ENCODE measurements at regions of chr14 and their contacts with region 1.

Region 1: GRCh38 chr14:60724137-60724619 is at the start of gene SIX4:
- DNase-seq: peak; percentile 34
- H3K4me3 Mint-ChIP-seq: peak within 1 kb of the TSS; percentile 79
- H3K27ac Mint-ChIP-seq: no peak within 1 kb of the TSS
- H3K4me1 Mint-ChIP-seq: peaks cover 11% of the 10 kb centered on the region
- H3K27me3 Mint-ChIP-seq: peaks cover 71% of the 10 kb centered on the region
- total RNA-seq, gene SIX4: 0.17 TPM in 1 of 2 experiments, not detected in the other

Region 2: GRCh38 chr14:60648934-60649874 is 75.0 kb before region 1 on chr14 and contains the start of gene SIX1:
- CTCF ChIA-PET with region 1: no interaction called
- POLR2A ChIA-PET with region 1: no interaction called
- intact Hi-C with region 1: loop called (anchors 5 kb)
- DNase-seq: peak; percentile 45
- H3K4me3 Mint-ChIP-seq: peak within 1 kb of the TSS; percentile 32
- H3K27ac Mint-ChIP-seq: no peak within 1 kb of the TSS
- H3K4me1 Mint-ChIP-seq: peaks cover 58% of the 10 kb centered on the region
- H3K27me3 Mint-ChIP-seq: peaks cover 86% of the 10 kb centered on the region
- total RNA-seq, gene SIX1: not detected

Region 3: DNA sequence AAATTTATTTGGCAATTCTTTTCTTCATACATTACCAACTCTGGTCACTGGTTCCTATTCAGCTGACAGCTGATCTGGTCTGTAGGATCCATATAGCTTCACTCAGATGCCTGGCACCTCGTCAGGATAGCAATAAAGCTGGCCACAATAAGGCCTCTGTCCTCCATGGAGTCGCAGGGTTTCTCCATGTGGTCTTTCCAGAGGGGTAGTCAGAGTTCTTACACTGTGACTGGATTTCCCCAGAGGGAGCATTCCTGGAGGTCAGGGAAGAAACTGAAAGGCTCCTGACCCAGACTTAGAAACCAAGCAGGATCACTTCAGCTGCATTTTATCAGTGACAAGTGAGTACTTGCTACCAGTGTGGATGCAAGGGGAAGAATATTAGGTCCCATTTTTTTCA is 40.0 kb before region 1 on chr14:
- CTCF ChIA-PET with region 1: no interaction called
- POLR2A ChIA-PET with region 1: no interaction called
- intact Hi-C with region 1: no loop called
- DNase-seq: no peak
- H3K4me3 Mint-ChIP-seq: no peak overlapping the region
- H3K27ac Mint-ChIP-seq: no peak overlapping the region
- H3K4me1 Mint-ChIP-seq: no peaks in the 10 kb centered on the region
- H3K27me3 Mint-ChIP-seq: peaks cover 14% of the 10 kb centered on the region

Region 4: GRCh38 chr14:60734465-60735242 is 10.5 kb after region 1 on chr14 and contains the start of gene MNAT1:
- CTCF ChIA-PET with region 1: interaction called, 7 read pairs
- POLR2A ChIA-PET with region 1: no interaction called
- intact Hi-C with region 1: loop called (anchors 1 kb)
- DNase-seq: peak; percentile 85
- H3K4me3 Mint-ChIP-seq: peak within 1 kb of the TSS; percentile 95
- H3K27ac Mint-ChIP-seq: peak within 1 kb of the TSS; percentile 67
- H3K4me1 Mint-ChIP-seq: peaks cover 15% of the 10 kb centered on the region
- H3K27me3 Mint-ChIP-seq: peaks cover 16% of the 10 kb centered on the region
- total RNA-seq, gene MNAT1: 35.3 to 38.5 TPM

Region 5: GRCh38 chr14:60980811-60981632 is 256.8 kb after region 1 on chr14 and contains the starts of genes SLC38A6 and TRMT5:
- CTCF ChIA-PET with region 1: no interaction called
- POLR2A ChIA-PET with region 1: interaction called, 6 read pairs
- intact Hi-C with region 1: loop called (anchors 5 kb)
- DNase-seq: peak; percentile 95
- H3K4me3 Mint-ChIP-seq: no peak within 1 kb of the TSS
- H3K27ac Mint-ChIP-seq: no peak within 1 kb of the TSS
- H3K4me1 Mint-ChIP-seq: peaks cover 21% of the 10 kb centered on the region
- H3K27me3 Mint-ChIP-seq: no peaks in the 10 kb centered on the region
- total RNA-seq, gene SLC38A6: 5.4 to 5.6 TPM
- total RNA-seq, gene TRMT5: 18.2 to 18.3 TPM

Region 6: GRCh38 chr14:61269321-61270083 is 545.3 kb after region 1 on chr14:
- CTCF ChIA-PET with region 1: no interaction called
- POLR2A ChIA-PET with region 1: no interaction called
- intact Hi-C with region 1: no loop called
- DNase-seq: peak; percentile 86
- H3K4me3 Mint-ChIP-seq: peak overlapping the region; percentile 60
- H3K27ac Mint-ChIP-seq: no peak overlapping the region
- H3K4me1 Mint-ChIP-seq: no peaks in the 10 kb centered on the region
- H3K27me3 Mint-ChIP-seq: peaks cover 28% of the 10 kb centered on the region

Region 7: GRCh38 chr14:61385002-61385685 is 661.0 kb after region 1 on chr14:
- CTCF ChIA-PET with region 1: no interaction called
- POLR2A ChIA-PET with region 1: no interaction called
- intact Hi-C with region 1: no loop called
- DNase-seq: peak; percentile 73
- H3K4me3 Mint-ChIP-seq: no peak overlapping the region
- H3K27ac Mint-ChIP-seq: no peak overlapping the region
- H3K4me1 Mint-ChIP-seq: peaks cover 29% of the 10 kb centered on the region
- H3K27me3 Mint-ChIP-seq: no peaks in the 10 kb centered on the region

Measured in activated CD4-positive, alpha-beta memory T cell treated with anti-CD3 and anti-CD28 coated beads for 36 hours (primary cell).